ENCODE measurements at regions of chr6 and their contacts with region 1.

Region 1: DNA sequence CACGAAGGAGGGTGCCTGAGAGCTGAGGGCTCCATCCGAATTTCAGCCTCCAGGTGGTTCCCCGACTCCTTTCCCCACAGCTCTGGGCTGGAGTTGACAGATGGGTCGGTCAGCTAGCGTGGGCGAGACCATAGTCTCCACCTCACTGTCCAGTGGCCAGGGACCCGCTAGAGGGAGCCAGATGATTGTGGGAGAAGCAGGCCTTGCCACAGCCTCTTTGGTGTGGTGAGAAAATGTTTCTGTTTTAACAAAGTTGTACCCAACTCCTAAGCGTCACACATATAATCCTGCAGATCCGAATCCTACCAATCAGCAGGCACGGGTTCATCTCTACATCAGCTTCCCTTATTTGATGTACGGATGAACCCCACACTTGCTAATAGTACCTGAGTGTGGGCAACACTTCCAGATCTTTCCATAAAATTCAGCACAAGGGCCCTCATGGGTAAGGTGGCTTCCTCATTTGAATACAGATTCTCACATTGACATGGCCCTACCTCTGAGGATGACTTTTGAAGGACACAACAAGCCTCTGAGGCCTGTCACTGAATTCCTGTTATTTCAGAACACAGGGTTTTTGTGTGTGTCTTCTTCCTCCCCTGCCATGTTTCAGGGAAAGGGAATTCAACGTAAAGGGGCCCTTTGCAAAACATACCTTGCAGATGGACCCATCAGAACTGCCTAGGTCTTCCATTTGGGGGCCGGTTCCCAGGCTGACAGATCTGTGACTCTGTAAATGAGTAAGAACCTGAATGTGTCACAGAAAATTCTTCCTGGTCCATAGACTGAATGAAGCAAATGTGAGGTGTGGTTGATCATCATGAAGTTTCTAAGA is 103.2 kb upstream of the DUSP22 start:
- DNase-seq: peak; percentile 65 to 76 (median 74)
- H3K4me3 ChIP-seq: no peak overlapping the region
- H3K4me3 Mint-ChIP-seq: no peak overlapping the region
- H3K27ac ChIP-seq: no peak overlapping the region
- H3K27ac Mint-ChIP-seq: no peak overlapping the region
- H3K4me1 ChIP-seq: peaks cover 7 to 10% of the 10 kb centered on the region in 2 donors
- H3K4me1 Mint-ChIP-seq: peaks cover 15% of the 10 kb centered on the region
- H3K27me3 ChIP-seq: no peaks in the 10 kb centered on the region
- H3K27me3 Mint-ChIP-seq: peaks cover 2 to 8% (median 4%) of the 10 kb centered on the region in 3 donors
- CTCF ChIP-seq: peak; percentile 87

Region 2: DNA sequence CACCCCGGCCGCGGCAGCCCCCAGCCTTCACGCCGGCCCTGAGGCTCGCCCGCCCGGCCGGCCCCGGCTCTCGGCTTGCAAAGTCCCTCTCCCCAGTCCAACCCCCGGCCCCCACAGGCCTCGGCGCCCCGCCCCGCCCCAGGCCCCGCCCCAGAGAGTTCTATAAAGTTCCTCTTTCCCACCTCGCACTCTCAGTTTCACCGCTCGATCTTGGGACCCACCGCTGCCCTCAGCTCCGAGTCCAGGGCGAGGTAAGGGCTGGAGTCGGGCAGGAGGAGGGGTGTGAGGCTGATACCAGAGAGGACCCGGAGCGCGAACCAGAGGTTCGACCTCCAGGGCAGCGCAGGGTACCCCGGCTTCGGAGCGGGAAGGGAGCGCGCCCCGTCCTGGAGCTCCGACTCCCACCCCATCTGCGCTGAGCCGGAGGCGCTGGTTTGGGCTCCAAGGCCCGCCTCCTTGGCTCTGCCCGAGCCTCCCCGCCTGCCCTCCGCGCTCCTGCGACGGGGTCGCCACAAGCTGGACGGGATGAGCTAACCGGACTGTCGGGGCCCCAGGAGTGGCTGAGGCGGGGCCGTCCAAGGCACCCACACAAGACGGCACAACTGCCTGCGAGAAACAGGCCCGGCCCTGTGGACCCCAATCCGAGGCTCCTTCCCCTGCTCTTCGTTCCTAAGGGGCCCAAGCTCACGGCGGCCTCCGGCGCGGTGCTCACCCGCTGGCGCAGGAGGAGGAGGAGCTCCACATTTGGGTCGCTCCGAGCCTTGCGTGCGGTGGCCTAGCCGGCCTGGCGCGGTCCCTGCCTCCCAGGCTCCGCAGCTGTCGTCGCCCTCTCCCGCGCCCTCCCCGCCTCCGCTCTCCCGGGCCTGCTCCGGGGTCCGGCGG is 202.8 kb after region 1 on chr6 and contains the start of gene IRF4:
- intact Hi-C with region 1: loop called in 1 of 2 experiments (anchors 5 kb)
- DNase-seq: peak; percentile 35 to 56 (median 47)
- H3K4me3 ChIP-seq: peak within 1 kb of the TSS; percentile 55 to 84 (median 57)
- H3K4me3 Mint-ChIP-seq: peak within 1 kb of the TSS; percentile 98 to 99
- H3K27ac ChIP-seq: peak within 1 kb of the TSS in 1 of 2 donors; percentile 68
- H3K27ac Mint-ChIP-seq: peak within 1 kb of the TSS in 6 of 7 donors; percentile 54 to 91 (median 72)
- H3K4me1 ChIP-seq: peaks cover 42 to 55% of the 10 kb centered on the region in 2 donors
- H3K4me1 Mint-ChIP-seq: peaks cover 49% of the 10 kb centered on the region
- H3K27me3 ChIP-seq: peaks cover 47 to 73% of the 10 kb centered on the region in 2 donors
- H3K27me3 Mint-ChIP-seq: peaks cover 66 to 82% (median 71%) of the 10 kb centered on the region in 3 donors
- CTCF ChIP-seq: no peak
- polyA plus RNA-seq, gene IRF4: 3.0 to 13.6 (median 6.4) TPM

Region 3: GRCh38 chr6:399785-400534 is 210.9 kb after region 1 on chr6:
- intact Hi-C with region 1: loop called (anchors 5 kb)
- DNase-seq: no peak
- H3K4me3 ChIP-seq: no peak overlapping the region
- H3K4me3 Mint-ChIP-seq: no peak overlapping the region
- H3K27ac ChIP-seq: no peak overlapping the region
- H3K27ac Mint-ChIP-seq: no peak overlapping the region
- H3K4me1 ChIP-seq: no peaks in the 10 kb centered on the region
- H3K4me1 Mint-ChIP-seq: peaks cover 5% of the 10 kb centered on the region
- H3K27me3 ChIP-seq: peaks cover 7 to 40% of the 10 kb centered on the region in 2 donors
- H3K27me3 Mint-ChIP-seq: peaks cover 37 to 49% (median 44%) of the 10 kb centered on the region in 3 donors
- CTCF ChIP-seq: no peak

Region 4: GRCh38 chr6:408599-409102 is 219.6 kb after region 1 on chr6:
- intact Hi-C with region 1: loop called (anchors 5 kb)
- DNase-seq: peak; percentile 56 to 71 (median 59)
- H3K4me3 ChIP-seq: no peak overlapping the region
- H3K4me3 Mint-ChIP-seq: peak overlapping the region in 1 of 2 donors; percentile 35
- H3K27ac ChIP-seq: peak overlapping the region in 1 of 2 donors; percentile 3
- H3K27ac Mint-ChIP-seq: peak overlapping the region in 5 of 7 donors; percentile 15 to 79 (median 64)
- H3K4me1 ChIP-seq: peaks cover 8 to 11% of the 10 kb centered on the region in 2 donors
- H3K4me1 Mint-ChIP-seq: peaks cover 11% of the 10 kb centered on the region
- H3K27me3 ChIP-seq: peaks cover 3 to 8% of the 10 kb centered on the region in 2 donors
- H3K27me3 Mint-ChIP-seq: peaks cover 26 to 38% (median 27%) of the 10 kb centered on the region in 3 donors
- CTCF ChIP-seq: peak; percentile 82

Measured in CD14-positive monocyte (primary cell).